HEK293 (cell line): ENCODE measurements at regions of chr6 and their contacts with region 1.

Region 1: GRCh38 chr6:134938896-134939295 is 11.0 kb downstream of the ALDH8A1 start:
- H3K4me3 ChIP-seq: no peak overlapping the region
- H3K27ac ChIP-seq: no peak overlapping the region
- H3K4me1 ChIP-seq: peaks cover 4% of the 10 kb centered on the region; the same call in 1 of the 2 replicates
- CTCF ChIP-seq: no peak

Region 2: DNA sequence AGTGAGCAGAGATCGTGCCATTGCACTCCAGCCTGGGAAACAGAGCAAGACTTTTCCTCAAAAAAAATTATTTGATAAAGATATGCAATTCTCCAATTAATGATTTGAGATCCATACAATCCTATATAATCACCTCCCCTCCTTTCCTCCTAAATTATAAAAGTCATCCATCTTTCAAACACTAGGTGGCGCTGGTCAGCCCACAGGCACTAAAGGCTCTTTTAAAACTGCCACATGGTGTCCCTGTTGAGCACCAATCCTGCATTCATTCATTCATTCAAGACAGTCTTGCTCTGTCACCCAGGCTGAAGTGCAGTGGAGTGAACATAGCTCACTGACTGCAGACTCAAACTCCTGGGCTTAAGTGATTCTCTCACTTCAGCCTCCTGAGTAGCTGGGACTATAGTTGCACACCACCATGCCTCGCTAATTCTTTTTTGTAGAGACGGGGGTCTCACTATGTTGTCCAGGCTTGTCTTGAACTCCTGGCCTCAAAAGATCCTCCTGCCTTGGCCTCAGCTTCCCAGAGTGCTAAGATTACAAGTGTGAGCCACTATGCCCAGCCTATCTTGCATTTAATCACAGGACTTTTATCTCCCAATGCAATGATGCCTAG is 827.7 kb before region 1 on chr6:
- CTCF ChIA-PET with region 1: interaction called, 40 read pairs
- POLR2A ChIA-PET with region 1: no interaction called
- H3K4me3 ChIP-seq: no peak overlapping the region
- H3K27ac ChIP-seq: no peak overlapping the region
- H3K4me1 ChIP-seq: peaks cover 7% of the 10 kb centered on the region
- CTCF ChIP-seq: peak; percentile 77

Region 3: DNA sequence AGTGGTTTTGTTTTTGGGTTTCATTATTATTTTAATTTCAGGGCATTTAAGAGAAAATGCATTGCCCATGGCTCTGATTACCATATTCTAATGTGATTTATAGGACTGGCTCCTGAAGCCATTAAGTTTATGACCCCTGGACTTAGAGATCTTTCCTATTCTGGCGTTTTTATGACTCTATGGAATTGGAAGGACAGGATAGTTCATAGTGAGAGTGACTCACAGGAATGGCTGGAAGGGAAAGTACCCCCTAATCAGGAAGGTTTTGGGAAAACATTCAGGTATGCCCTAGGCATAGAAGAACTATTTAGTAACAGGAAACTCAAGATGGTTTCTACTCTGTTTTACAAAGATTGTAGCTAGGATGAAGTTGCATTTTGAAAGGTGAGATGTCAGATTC is 777.9 kb before region 1 on chr6:
- CTCF ChIA-PET with region 1: interaction called, 44 read pairs
- POLR2A ChIA-PET with region 1: no interaction called
- H3K4me3 ChIP-seq: no peak overlapping the region
- H3K27ac ChIP-seq: no peak overlapping the region
- H3K4me1 ChIP-seq: no peaks in the 10 kb centered on the region
- CTCF ChIP-seq: no peak

Region 4: DNA sequence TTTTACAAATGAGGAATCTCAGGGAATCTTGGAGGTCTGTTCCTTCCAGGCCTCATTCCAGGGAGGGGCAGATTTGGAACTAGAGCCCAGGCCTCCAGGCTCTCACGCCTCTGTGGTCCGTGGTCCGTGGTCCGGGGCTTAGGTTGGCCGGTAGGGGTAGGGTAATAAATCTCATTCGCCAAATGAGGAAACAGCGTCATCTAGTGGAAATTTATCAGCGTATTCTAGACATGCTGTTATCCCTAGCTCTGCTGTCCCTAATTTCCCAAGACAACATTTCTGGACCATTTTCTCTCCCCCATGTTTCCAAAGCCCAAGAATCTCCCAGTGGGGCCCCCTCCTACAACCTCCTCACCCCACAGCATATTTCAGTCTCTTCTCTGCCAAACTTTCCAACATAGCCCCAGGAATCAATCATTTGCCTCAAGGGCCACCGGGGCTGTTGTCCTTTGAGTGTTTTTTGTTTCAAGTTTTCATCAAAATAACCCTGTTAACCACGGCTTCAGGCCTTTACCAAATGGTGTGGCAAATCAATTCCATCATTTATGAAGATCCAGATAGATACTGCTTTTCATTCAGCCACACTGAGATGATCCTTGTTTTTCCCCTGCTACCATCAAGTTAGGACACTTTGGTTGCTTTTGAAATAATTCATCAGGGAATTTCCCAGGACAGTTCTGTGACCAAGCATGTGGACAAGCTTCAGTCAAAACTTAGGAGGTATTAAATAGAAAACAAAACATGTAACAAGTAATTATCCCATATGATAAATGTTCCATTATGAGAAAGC is 115.8 kb before region 1 on chr6:
- CTCF ChIA-PET with region 1: interaction called, 33 read pairs
- POLR2A ChIA-PET with region 1: no interaction called
- H3K4me3 ChIP-seq: no peak overlapping the region
- H3K27ac ChIP-seq: no peak overlapping the region
- H3K4me1 ChIP-seq: no peaks in the 10 kb centered on the region; the same call in 1 of the 2 replicates
- CTCF ChIP-seq: peak; percentile 95

Region 5: GRCh38 chr6:134908906-134909516 is 29.9 kb before region 1 on chr6:
- CTCF ChIA-PET with region 1: interaction called, 20 read pairs
- POLR2A ChIA-PET with region 1: no interaction called
- H3K4me3 ChIP-seq: no peak overlapping the region
- H3K27ac ChIP-seq: no peak overlapping the region
- H3K4me1 ChIP-seq: no peaks in the 10 kb centered on the region
- CTCF ChIP-seq: no peak

Region 6: DNA sequence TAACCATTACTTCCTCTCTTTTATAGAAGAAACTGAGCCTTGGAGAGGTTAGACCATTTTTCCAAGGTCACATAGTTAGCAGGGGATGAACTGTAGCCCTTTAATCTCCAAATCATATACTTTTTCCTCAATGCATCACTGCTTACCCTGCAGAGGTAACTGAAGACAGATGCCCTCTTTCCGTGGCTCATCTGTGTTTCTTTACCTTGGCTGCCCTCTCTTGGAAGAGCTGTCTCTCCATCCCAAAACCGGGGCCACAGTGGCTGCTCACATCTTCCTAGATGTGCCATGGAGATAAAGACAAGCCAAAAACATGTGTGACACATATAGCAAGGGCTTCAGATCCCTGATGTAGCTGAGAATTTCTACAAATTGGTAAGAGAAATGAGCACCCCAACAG is 11.6 kb after region 1 on chr6:
- CTCF ChIA-PET with region 1: interaction called, 13 read pairs
- POLR2A ChIA-PET with region 1: no interaction called
- H3K4me3 ChIP-seq: no peak overlapping the region
- H3K27ac ChIP-seq: no peak overlapping the region
- H3K4me1 ChIP-seq: no peaks in the 10 kb centered on the region
- CTCF ChIP-seq: no peak